ENCODE measurements at regions of chr21 and their contacts with region 1.

Region 1: DNA sequence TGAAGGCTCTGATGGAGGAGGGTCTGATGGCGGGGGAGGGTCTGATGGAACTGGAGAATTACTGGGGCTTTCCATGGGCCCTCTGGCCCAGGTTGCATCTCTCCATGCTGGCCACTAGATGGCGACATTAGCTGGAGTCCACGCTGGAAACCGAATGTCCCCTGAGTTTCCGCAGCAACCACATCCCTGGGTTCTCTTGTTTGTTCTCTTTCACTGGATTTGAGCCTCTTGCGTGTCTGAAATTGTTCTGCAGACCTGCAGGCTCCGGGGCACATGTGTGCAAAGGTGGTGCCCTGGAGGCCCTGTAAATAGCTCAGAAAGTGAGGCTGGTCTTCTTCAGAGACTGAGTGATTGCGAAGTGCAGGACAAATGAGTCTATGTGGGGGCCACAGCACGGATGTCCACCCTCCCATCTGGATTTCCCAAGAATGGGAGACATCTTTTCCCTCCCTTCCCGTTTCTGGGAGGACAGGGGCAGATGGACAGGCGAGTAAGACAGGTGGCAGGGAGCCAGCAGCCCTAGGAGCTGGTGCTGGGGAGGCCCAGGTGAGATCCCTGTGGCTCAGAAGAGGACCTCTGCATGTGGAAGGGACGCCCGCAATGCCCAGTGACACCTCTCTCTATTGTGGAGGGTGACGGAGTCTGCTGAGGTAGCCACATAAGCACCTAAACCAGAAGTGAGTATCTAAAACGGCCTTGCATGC is 73.2 kb upstream of the ABCG1 start:
- DNase-seq: peak; percentile 69
- H3K4me3 Mint-ChIP-seq: no peak overlapping the region
- H3K27ac Mint-ChIP-seq: no peak overlapping the region
- H3K4me1 Mint-ChIP-seq: peaks cover 8% of the 10 kb centered on the region
- H3K27me3 Mint-ChIP-seq: peaks cover 3% of the 10 kb centered on the region

Region 2: GRCh38 chr21:42164064-42164789 is 18.5 kb after region 1 on chr21:
- CTCF ChIA-PET with region 1: interaction called, 11 read pairs
- POLR2A ChIA-PET with region 1: no interaction called
- DNase-seq: peak; percentile 71
- H3K4me3 Mint-ChIP-seq: no peak overlapping the region
- H3K27ac Mint-ChIP-seq: no peak overlapping the region
- H3K4me1 Mint-ChIP-seq: peaks cover 16% of the 10 kb centered on the region
- H3K27me3 Mint-ChIP-seq: peaks cover 3% of the 10 kb centered on the region